Activated T-helper 1 cell treated with anti-CD3 and anti-CD28 coated beads, Interleukin-12 subunit alpha, Interleukin-12 subunit beta, Interleukin-2, Interleukin-4 antibody, amounts not matched to agents 30 ng/mL and 10 ng/mL and 1 ng/mL, durations not matched to agents 14 hours and 24 hours and 36 hours (primary cell): ENCODE measurements at regions of chr1 and their contacts with region 1.

Region 1: GRCh38 chr1:19596714-19597495 is 47.2 kb upstream of the NBL1 start:
- DNase-seq: peak; percentile 96
- H3K4me3 Mint-ChIP-seq: peak overlapping the region; percentile 97
- H3K27ac Mint-ChIP-seq: peak overlapping the region; percentile 100
- H3K4me1 Mint-ChIP-seq: peaks cover 42% of the 10 kb centered on the region
- H3K27me3 Mint-ChIP-seq: peaks cover 6% of the 10 kb centered on the region

Region 2: GRCh38 chr1:19209990-19210771 is 386.7 kb before region 1 on chr1 and contains the start of gene UBR4:
- intact Hi-C with region 1: loop called (anchors 2 kb)
- DNase-seq: peak; percentile 97
- H3K4me3 Mint-ChIP-seq: peak within 1 kb of the TSS; percentile 94
- H3K27ac Mint-ChIP-seq: peak within 1 kb of the TSS; percentile 98
- H3K4me1 Mint-ChIP-seq: peaks cover 63% of the 10 kb centered on the region
- H3K27me3 Mint-ChIP-seq: no peaks in the 10 kb centered on the region
- total RNA-seq, gene UBR4: 155 and 161 TPM in 2 replicates

Region 3: GRCh38 chr1:19240673-19241538 is 356.0 kb before region 1 on chr1:
- intact Hi-C with region 1: no loop called
- DNase-seq: peak; percentile 54
- H3K4me3 Mint-ChIP-seq: no peak overlapping the region
- H3K27ac Mint-ChIP-seq: no peak overlapping the region
- H3K4me1 Mint-ChIP-seq: no peaks in the 10 kb centered on the region
- H3K27me3 Mint-ChIP-seq: no peaks in the 10 kb centered on the region

Region 4: DNA sequence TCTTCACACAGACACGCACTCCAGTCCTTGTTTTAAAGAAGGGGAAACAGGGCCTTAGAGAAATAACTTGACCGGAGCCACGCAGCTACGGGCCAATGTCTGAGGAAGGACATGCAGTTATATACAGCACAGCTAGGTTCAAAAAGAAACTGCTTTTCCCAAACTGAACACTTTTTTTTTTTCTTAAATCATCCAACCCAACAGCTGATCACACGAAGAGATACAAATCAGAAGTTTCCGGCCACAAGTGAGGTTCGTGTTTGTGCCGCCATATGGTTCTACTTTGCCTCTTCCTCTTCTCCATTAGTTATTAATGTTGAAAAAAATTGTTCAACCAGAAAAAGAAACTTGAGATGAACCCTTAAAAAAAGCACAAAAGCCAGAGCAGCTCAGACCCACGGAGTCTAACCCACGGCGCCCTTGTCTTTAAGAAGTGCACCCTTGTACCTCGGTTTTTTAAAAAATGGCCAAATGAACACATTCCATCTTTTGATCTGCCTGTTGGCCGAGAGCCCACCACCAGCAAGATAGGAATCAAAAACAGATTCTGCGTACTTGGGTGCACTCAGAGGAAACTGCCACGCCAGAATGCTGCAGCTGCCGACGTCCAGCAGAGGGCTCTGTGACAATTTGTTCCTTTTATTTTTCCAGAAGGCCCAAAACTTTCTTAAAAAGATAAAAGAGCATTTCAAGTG is 205.9 kb before region 1 on chr1:
- intact Hi-C with region 1: loop called (anchors 2 kb)
- DNase-seq: peak; percentile 46
- H3K4me3 Mint-ChIP-seq: peak overlapping the region; percentile 76
- H3K27ac Mint-ChIP-seq: peak overlapping the region; percentile 88
- H3K4me1 Mint-ChIP-seq: peaks cover 52% of the 10 kb centered on the region
- H3K27me3 Mint-ChIP-seq: no peaks in the 10 kb centered on the region

Region 5: DNA sequence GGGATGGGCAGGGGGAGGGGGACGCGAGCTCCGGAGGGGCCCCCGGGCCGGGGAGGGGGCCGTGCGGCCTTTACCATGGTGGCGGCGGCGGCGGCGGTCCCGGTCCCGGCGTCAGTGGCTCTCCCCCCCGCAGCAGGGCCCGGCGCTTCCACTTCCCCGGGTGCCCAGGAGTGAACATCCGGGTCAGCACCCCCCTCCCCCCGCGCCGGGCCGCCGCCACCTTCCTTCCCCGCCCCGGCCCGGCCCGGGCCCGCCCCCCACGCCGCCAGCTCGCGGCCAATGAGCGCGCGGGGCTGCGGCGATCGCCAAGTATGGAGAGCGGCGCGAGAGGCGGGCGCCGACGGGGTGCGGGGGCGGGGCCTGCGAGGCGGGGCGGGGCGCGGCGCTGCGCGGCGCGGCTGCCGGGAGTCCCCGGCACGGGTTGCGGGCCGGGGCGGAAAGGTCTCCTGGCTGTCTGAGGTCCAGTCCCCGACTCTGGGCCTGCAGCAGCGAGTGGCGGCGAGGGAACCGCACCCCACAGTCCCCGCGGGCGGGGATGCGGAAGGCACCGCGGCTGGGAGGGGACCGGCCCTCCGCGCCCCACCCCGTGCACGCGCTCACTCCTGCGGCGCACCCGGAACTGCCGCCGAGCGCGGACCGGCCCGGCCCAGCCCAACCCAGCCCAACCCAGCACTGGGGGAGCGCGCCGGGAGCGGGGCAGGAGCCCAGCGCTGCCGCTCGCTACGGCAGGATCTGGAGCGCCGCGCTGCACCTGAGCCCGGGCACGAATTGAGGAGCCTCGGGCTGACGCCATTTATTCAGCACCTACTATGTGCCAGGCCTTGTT is 111.3 kb before region 1 on chr1 and contains the start of gene CAPZB:
- intact Hi-C with region 1: loop called (anchors 1 kb)
- DNase-seq: peak; percentile 90
- H3K4me3 Mint-ChIP-seq: peak within 1 kb of the TSS; percentile 94
- H3K27ac Mint-ChIP-seq: peak within 1 kb of the TSS; percentile 88
- H3K4me1 Mint-ChIP-seq: peaks cover 63% of the 10 kb centered on the region
- H3K27me3 Mint-ChIP-seq: no peaks in the 10 kb centered on the region
- total RNA-seq, gene CAPZB: 317 and 323 TPM in 2 replicates

Region 6: DNA sequence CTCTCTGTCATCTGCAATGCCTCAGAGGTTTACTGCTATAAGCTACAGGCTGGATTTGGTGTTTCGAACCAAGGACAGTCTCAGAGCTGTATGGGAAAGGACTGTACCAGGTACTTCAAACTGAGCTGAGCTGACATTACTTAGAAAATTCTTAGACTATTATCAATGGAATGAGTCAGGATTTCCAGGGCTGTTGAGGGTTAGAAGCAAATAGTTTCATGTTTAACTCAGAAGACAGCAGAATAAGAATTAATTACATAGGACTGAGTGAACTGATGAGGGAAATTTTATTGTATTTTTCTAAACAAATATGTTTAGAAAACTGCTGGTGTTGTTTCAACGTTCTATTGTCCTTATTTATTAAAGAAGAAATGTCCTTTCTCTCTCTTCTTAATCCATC is 37.3 kb before region 1 on chr1:
- intact Hi-C with region 1: no loop called
- DNase-seq: no peak
- H3K4me3 Mint-ChIP-seq: no peak overlapping the region
- H3K27ac Mint-ChIP-seq: no peak overlapping the region
- H3K4me1 Mint-ChIP-seq: no peaks in the 10 kb centered on the region
- H3K27me3 Mint-ChIP-seq: peaks cover 19% of the 10 kb centered on the region

Region 7: DNA sequence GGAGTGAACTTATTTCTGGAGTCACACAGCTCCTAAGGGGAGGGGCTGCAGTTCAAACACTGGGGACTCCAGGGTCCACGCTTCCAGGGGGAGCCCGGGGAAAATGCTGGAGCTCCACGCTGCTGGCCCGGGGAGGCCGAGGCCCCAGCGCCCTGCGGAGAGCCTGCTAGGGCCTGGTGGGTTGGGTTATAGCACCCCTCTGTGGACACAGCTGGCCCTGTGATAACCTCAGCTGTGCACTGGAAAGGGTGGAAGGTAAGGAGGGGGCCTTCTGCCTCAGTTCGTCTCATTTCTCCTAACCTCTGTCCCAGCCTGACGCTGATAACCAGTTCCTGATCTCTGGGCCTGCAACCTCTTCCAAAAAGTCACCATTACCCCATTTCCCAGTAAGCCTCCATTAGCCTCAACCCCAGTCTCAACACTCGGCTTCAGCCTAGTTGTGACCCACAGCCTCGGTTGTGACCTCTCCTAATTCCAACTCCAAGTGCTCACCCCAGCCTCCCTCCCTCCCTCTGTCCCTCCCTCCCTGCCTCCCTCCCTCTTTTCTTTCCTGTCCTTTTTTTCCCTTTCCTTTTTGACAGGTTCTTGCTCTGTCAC is 54.3 kb after region 1 on chr1:
- intact Hi-C with region 1: loop called (anchors 2 kb)
- DNase-seq: no peak
- H3K4me3 Mint-ChIP-seq: no peak overlapping the region
- H3K27ac Mint-ChIP-seq: no peak overlapping the region
- H3K4me1 Mint-ChIP-seq: peaks cover 27% of the 10 kb centered on the region
- H3K27me3 Mint-ChIP-seq: no peaks in the 10 kb centered on the region